Naive thymus-derived CD4-positive, alpha-beta T cell (primary cell): ENCODE measurements at regions of chr22 and their contacts with region 1.

Region 1: DNA sequence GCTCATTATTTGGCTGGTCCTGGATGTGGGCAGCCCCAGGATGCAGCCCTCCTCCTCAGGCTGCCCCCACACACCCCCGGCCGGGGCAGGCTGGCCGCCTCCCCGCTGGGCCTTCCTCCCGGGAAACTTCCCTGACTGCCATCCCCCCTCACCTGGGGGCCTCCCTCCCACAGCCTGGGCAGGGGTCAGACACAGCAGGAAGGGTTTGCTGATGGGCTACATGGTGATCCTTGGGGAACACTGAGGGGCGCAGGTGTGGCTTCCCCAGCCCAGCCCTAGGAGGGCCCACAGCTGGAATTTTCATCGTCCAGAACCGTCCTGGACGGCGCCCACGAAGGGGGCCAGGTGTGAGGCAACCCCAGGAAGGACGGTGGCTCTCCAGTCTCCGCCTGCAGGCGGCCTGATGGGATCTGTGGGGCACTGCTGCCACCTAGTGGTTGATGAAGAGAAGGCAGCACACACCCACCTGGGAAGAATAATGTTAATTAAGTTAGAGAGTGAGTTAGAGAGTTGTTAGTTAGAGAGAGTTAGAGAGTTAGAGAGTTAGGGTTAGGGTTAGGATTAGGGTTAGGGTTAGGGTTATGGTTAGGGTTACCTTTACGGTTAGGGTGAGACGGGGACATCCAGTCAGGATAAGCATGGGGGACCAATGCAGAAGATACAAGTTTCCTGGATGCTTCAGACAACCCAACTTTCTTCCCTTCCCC is 75.9 kb upstream of the PRR5 start:
- DNase-seq: peak; percentile 62 to 84 (median 75)
- ATAC-seq: peak; percentile 94
- H3K4me3 ChIP-seq: no peak overlapping the region
- H3K4me3 Mint-ChIP-seq: no peak overlapping the region
- H3K27ac ChIP-seq: no peak overlapping the region
- H3K27ac Mint-ChIP-seq: peak overlapping the region in 4 of 9 donors; percentile 1 to 28 (median 11)
- H3K4me1 ChIP-seq: no peaks in the 10 kb centered on the region
- H3K4me1 Mint-ChIP-seq: peaks cover 0 to 12% (median 5%) of the 10 kb centered on the region in 7 donors
- H3K27me3 ChIP-seq: no peaks in the 10 kb centered on the region
- H3K27me3 Mint-ChIP-seq: peaks cover 0 to 6% (median 0%) of the 10 kb centered on the region in 5 donors

Region 2: GRCh38 chr22:43385770-43386641 is 1240.1 kb before region 1 on chr22:
- CTCF ChIA-PET with region 1: no interaction called
- POLR2A ChIA-PET with region 1: no interaction called
- intact Hi-C with region 1: loop called in 1 of 2 experiments (anchors 5 kb)
- DNase-seq: peak; percentile 34 to 74 (median 63)
- ATAC-seq: peak; percentile 92
- H3K4me3 ChIP-seq: no peak overlapping the region
- H3K4me3 Mint-ChIP-seq: peak overlapping the region in 4 of 10 donors; percentile 18 to 51 (median 32)
- H3K27ac ChIP-seq: no peak overlapping the region
- H3K27ac Mint-ChIP-seq: no peak overlapping the region
- H3K4me1 ChIP-seq: no peaks in the 10 kb centered on the region
- H3K4me1 Mint-ChIP-seq: peaks cover 0 to 8% (median 3%) of the 10 kb centered on the region in 7 donors
- H3K27me3 ChIP-seq: peaks cover 0 to 3% of the 10 kb centered on the region in 2 donors
- H3K27me3 Mint-ChIP-seq: peaks cover 8 to 47% (median 18%) of the 10 kb centered on the region in 5 donors

Region 3: GRCh38 chr22:43955040-43955882 is 670.9 kb before region 1 on chr22 and contains the start of gene SAMM50:
- CTCF ChIA-PET with region 1: no interaction called
- POLR2A ChIA-PET with region 1: no interaction called
- intact Hi-C with region 1: loop called in 1 of 2 experiments (anchors 1 kb)
- DNase-seq: peak; percentile 77 to 93 (median 88)
- ATAC-seq: peak; percentile 98
- H3K4me3 ChIP-seq: peak within 1 kb of the TSS; percentile 76
- H3K4me3 Mint-ChIP-seq: peak within 1 kb of the TSS; percentile 90 to 100 (median 97)
- H3K27ac ChIP-seq: peak within 1 kb of the TSS; percentile 88
- H3K27ac Mint-ChIP-seq: peak within 1 kb of the TSS; percentile 86 to 97 (median 94)
- H3K4me1 ChIP-seq: peaks cover 9 to 13% of the 10 kb centered on the region in 2 donors
- H3K4me1 Mint-ChIP-seq: peaks cover 30 to 58% (median 46%) of the 10 kb centered on the region in 7 donors
- H3K27me3 ChIP-seq: peaks cover 0 to 4% of the 10 kb centered on the region in 2 donors
- H3K27me3 Mint-ChIP-seq: peaks cover 0 to 6% (median 4%) of the 10 kb centered on the region in 5 donors
- total RNA-seq, gene SAMM50: 25.9 to 47.1 (median 34.0) TPM

Region 4: DNA sequence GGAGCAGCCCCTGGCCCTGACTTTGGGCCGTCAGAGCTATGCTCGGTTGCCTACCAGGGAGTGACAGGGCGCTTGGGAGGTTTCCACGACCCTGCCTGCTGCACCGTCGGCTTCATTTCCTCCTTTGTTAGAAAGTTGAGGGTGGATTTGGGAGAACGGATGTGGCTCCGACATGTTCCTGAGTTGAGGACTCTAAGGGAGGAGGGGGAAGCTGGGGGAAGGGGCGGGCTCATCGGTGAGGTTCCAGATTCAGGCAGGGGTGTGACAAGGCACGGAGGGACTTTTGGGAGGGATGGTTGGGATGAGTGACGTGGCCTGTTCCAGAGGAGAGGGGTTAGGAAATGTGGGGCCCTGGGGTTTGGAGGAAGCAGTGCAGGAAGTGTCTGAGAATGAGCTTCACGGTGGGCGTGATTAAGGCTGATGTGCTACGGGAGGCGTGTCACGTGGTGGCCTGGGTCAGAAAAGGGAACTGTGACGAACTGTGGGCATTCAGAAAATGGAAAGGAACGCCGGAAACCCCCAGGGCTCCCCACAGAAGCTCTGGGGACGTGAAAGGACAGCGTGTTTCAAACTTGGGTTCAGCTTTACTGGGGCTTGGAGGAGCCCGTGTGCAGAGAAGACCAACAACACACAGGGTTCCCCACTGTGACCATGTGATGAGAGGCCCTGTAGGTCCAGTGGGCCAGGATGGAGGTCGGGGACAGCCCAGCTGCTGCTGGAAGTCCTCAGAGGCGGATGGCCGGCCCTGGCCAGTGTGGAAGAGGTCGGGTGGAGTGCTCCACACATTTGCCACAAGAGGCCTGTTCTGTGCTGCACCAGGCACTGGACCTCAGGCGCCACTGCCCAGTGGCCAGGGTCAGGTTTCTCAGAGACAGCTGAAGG is 599.3 kb before region 1 on chr22:
- CTCF ChIA-PET with region 1: no interaction called
- POLR2A ChIA-PET with region 1: no interaction called
- intact Hi-C with region 1: no loop called
- DNase-seq: peak in 6 of 9 donors; percentile 19 to 73 (median 34)
- ATAC-seq: peak; percentile 86
- H3K4me3 ChIP-seq: peak overlapping the region; percentile 54
- H3K4me3 Mint-ChIP-seq: peak overlapping the region; percentile 45 to 89 (median 76)
- H3K27ac ChIP-seq: peak overlapping the region; percentile 63
- H3K27ac Mint-ChIP-seq: peak overlapping the region in 7 of 9 donors; percentile 55 to 97 (median 78)
- H3K4me1 ChIP-seq: peaks cover 15 to 24% of the 10 kb centered on the region in 2 donors
- H3K4me1 Mint-ChIP-seq: peaks cover 28 to 68% (median 40%) of the 10 kb centered on the region in 7 donors
- H3K27me3 ChIP-seq: no peaks in the 10 kb centered on the region
- H3K27me3 Mint-ChIP-seq: peaks cover 0 to 32% (median 27%) of the 10 kb centered on the region in 5 donors

Region 5: DNA sequence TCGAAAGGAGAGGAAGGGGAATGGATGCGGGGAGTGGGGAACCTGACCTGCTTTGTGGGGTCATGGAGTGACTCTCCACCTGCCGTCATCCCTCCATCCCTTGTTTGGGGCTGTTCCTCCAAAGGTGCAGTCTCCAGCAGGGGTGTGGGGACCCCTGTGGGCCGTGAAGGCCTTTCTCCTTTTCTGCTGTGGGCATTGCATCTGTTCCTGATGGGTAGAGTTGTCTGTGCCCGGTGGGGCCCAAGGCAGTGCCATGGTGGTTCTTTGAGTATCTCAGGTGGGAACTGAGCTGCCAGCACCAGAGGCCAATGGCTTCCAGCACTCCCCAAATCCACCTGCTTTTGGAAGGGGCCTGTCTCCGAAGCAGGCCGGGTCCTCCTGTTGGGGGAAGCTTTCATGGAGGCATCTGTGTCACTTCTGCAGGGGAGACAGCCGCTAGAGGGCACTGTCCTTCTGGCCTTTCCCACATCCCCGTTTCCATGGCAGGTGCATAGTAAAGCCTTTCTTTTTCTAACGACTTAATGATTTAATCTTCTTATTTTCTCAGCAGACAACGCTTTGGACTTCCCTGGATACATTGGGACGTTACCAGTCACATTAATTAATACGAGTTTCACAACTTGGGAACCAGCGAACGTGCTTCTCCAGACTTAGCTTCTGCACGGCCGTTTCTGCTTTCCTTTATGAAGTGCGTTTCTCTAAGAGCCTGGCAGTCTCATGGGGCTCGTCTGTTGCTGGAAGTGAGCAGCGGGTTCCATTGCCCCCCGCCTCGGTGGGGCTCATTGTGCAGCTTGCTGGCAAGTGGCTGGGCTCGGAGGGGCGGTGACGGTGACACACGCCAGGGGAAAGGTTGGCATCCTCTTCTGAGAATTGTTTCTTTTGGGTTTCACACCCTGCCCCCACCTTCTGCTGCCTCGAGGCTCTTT is 544.9 kb before region 1 on chr22:
- CTCF ChIA-PET with region 1: interaction called, 8 read pairs
- POLR2A ChIA-PET with region 1: no interaction called
- intact Hi-C with region 1: loop called (anchors 1 kb)
- DNase-seq: peak; percentile 15 to 58 (median 50)
- ATAC-seq: peak; percentile 72
- H3K4me3 ChIP-seq: no peak overlapping the region
- H3K4me3 Mint-ChIP-seq: no peak overlapping the region
- H3K27ac ChIP-seq: no peak overlapping the region
- H3K27ac Mint-ChIP-seq: no peak overlapping the region
- H3K4me1 ChIP-seq: no peaks in the 10 kb centered on the region
- H3K4me1 Mint-ChIP-seq: no peaks in the 10 kb centered on the region
- H3K27me3 ChIP-seq: no peaks in the 10 kb centered on the region
- H3K27me3 Mint-ChIP-seq: no peaks in the 10 kb centered on the region

Region 6: DNA sequence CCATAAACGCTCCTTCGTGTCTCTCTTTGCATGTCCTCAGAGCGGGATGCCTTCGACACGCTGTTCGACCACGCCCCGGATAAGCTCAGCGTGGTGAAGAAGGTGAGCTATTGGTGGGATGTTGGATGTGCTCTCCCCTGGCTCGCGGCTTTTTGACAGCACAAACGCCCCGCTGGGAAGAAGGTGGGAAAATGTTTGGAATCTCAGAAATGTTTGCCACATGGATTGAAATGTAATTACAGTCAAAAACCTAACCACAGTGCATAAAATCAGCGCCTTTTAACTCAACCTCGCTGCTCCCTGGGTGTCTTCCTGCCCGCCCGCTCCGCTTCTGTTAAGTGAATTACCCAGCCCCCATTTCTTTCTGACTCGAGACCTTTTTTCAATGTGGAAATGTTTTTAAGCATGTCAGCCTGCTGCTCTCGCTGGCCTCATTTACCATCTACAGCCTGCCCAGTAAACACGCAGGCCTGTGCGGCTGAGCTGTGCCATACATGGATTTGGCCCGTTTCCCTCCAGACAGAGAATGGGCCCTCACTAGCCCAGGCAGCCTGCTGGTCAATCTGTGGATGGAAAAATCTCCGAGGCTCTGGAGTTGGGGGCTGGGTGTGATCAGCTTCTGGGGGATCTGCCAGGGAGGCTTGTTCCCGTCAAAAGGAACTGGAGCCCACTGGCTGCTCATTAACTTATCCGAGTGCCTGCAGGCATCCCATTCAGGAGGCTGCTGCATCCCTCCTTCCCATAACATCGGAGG is 478.1 kb before region 1 on chr22:
- CTCF ChIA-PET with region 1: no interaction called
- POLR2A ChIA-PET with region 1: no interaction called
- intact Hi-C with region 1: no loop called
- DNase-seq: no peak
- ATAC-seq: no peak
- H3K4me3 ChIP-seq: no peak overlapping the region
- H3K4me3 Mint-ChIP-seq: no peak overlapping the region
- H3K27ac ChIP-seq: no peak overlapping the region
- H3K27ac Mint-ChIP-seq: no peak overlapping the region
- H3K4me1 ChIP-seq: no peaks in the 10 kb centered on the region
- H3K4me1 Mint-ChIP-seq: peaks cover 0 to 2% (median 0%) of the 10 kb centered on the region in 7 donors
- H3K27me3 ChIP-seq: no peaks in the 10 kb centered on the region
- H3K27me3 Mint-ChIP-seq: peaks cover 0 to 4% (median 0%) of the 10 kb centered on the region in 5 donors

Region 7: GRCh38 chr22:44567846-44568493 is 58.2 kb before region 1 on chr22:
- CTCF ChIA-PET with region 1: no interaction called
- POLR2A ChIA-PET with region 1: no interaction called
- intact Hi-C with region 1: no loop called
- DNase-seq: peak in 6 of 9 donors; percentile 4 to 25 (median 20)
- ATAC-seq: no peak
- H3K4me3 ChIP-seq: no peak overlapping the region
- H3K4me3 Mint-ChIP-seq: no peak overlapping the region
- H3K27ac ChIP-seq: no peak overlapping the region
- H3K27ac Mint-ChIP-seq: no peak overlapping the region
- H3K4me1 ChIP-seq: no peaks in the 10 kb centered on the region
- H3K4me1 Mint-ChIP-seq: peaks cover 0 to 4% (median 0%) of the 10 kb centered on the region in 7 donors
- H3K27me3 ChIP-seq: no peaks in the 10 kb centered on the region
- H3K27me3 Mint-ChIP-seq: peaks cover 0 to 13% (median 0%) of the 10 kb centered on the region in 5 donors

Region 8: DNA sequence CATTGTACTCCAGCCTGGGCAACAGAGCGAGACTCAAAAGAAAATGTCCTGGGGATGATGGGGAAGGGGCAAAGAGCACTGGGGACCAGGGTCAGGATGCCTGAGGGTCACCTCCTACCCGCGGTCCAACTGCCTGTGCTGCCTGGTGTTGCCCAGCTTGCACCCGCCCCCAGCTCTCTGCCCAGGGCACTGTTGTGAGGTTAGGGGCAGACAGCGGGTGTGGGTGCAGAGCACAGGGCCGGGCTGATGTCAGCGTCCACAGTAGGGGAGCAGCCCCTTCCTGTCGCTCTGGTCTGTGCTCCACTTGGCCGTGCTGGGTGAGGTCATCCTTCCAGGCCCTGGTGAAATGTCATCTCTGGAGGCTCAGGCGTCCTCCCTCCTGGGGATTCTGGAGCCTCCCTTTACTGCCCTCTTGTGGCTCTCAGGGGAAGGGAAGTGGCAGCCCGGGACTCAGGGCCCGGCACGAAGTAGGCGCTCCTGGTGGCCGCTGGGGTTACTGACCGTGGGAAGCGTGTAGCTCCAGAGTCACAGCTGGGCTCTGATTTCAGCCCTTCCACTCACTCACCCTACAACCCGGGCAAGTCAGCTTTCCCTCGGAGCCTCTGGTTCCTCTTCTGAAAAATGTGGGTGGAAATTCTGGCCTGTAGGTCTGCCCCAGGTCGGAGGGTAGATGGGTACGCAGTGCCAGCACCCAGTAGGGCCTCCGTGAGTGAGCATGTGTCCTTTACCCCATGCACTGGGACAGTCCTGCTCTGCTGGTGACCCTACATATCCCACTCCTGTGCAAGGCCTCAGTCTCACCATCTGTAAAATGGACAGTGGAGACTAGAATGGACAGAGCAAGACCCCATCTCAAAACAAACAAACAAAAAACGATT is 58.6 kb after region 1 on chr22:
- CTCF ChIA-PET with region 1: interaction called, 7 read pairs
- POLR2A ChIA-PET with region 1: interaction called, 3 read pairs
- intact Hi-C with region 1: loop called in 1 of 2 experiments (anchors 2 kb)
- DNase-seq: peak; percentile 58 to 84 (median 78)
- ATAC-seq: peak; percentile 95
- H3K4me3 ChIP-seq: no peak overlapping the region
- H3K4me3 Mint-ChIP-seq: peak overlapping the region in 8 of 10 donors; percentile 36 to 76 (median 52)
- H3K27ac ChIP-seq: no peak overlapping the region
- H3K27ac Mint-ChIP-seq: peak overlapping the region in 8 of 9 donors; percentile 43 to 84 (median 67)
- H3K4me1 ChIP-seq: peaks cover 16 to 39% of the 10 kb centered on the region in 2 donors
- H3K4me1 Mint-ChIP-seq: peaks cover 20 to 55% (median 37%) of the 10 kb centered on the region in 7 donors
- H3K27me3 ChIP-seq: no peaks in the 10 kb centered on the region
- H3K27me3 Mint-ChIP-seq: no peaks in the 10 kb centered on the region

Region 9: GRCh38 chr22:45026511-45026910 is 400.4 kb after region 1 on chr22:
- CTCF ChIA-PET with region 1: no interaction called
- POLR2A ChIA-PET with region 1: no interaction called
- intact Hi-C with region 1: no loop called
- DNase-seq: no peak
- ATAC-seq: no peak
- H3K4me3 ChIP-seq: no peak overlapping the region
- H3K4me3 Mint-ChIP-seq: no peak overlapping the region
- H3K27ac ChIP-seq: no peak overlapping the region
- H3K27ac Mint-ChIP-seq: no peak overlapping the region
- H3K4me1 ChIP-seq: no peaks in the 10 kb centered on the region
- H3K4me1 Mint-ChIP-seq: no peaks in the 10 kb centered on the region
- H3K27me3 ChIP-seq: no peaks in the 10 kb centered on the region
- H3K27me3 Mint-ChIP-seq: peaks cover 6 to 33% (median 30%) of the 10 kb centered on the region in 5 donors